Ovary (tissue), 10 donors: ENCODE measurements at regions of chr2 and their contacts with region 1.

Region 1: DNA sequence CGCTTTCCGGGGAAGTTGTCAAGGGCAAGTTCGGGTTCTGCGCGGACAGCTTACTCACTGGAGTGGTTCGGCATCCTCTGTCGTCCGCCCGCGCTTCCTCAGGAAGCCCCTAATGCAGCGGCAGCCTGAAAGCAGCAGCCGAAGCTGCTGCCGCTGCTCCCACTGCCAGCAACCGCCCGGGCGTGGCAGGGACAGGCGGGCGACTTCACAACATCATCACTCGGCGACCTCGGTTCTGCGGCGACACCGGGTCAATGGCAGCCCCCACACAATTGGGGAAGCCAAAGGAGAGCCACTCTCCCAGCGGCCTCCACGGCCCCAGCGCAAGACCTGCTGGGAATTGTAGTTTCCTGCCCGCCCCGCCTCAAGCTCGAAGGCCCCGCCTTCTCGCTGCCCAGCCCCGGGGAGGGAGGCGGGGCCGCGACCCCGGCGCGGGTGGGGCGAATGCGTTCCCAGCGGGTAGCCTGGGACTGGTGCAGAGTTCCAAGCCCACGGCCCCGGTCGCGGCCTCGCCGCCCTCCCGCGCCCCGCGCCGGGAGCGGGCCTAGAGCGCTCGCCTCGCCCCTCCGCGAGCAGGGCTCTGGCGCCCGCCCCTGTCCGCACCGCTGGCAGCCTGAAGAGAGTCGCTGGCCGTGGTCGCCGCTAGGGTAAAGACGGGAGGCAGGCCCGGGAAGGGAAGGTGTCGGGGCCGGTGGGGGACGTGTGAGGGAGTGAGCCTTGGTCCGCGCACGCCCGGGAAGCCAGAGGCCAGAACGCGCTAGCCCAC is at the starts of genes STRADB and TRAK2:
- DNase-seq: peak; percentile 90 to 95 (median 92)
- H3K4me3 ChIP-seq: peak within 1 kb of the TSS; percentile 77
- H3K27ac ChIP-seq: peak within 1 kb of the TSS; percentile 64 to 90
- H3K4me1 ChIP-seq: peaks cover 5% of the 10 kb centered on the region
- H3K27me3 ChIP-seq: no peaks in the 10 kb centered on the region
- CTCF ChIP-seq: peak; percentile 16 to 76 (median 36)
- EP300 ChIP-seq: no peak
- POLR2A ChIP-seq: peak; percentile 58
- total RNA-seq, gene STRADB: 13.7 to 20.4 (median 16.5) TPM
- total RNA-seq, gene TRAK2: 14.3 to 33.7 (median 20.2) TPM

Region 2: DNA sequence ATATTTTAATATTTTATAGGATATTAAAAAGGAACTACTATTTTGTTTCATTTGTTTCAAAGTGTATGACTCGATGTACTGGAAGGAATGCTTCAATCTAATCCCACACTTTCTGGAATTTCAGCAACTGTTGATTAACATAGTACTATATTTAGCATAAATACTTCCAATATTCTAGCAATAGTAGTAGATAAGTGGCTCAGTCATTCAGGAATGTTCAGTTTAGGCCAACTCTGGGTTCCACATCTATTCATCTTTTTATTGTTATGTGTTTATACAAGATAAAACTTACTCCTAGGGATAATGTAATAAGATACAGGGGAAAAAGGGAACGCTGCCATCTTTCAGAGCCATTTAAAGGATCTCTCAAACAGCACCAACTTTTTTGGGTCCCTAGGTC is 465.7 kb before region 1 on chr2:
- intact Hi-C with region 1: no loop called
- DNase-seq: no peak
- H3K4me3 ChIP-seq: no peak overlapping the region
- H3K27ac ChIP-seq: no peak overlapping the region
- H3K4me1 ChIP-seq: no peaks in the 10 kb centered on the region
- H3K27me3 ChIP-seq: no peaks in the 10 kb centered on the region
- CTCF ChIP-seq: no peak
- EP300 ChIP-seq: no peak
- POLR2A ChIP-seq: no peak

Region 3: GRCh38 chr2:201414099-201415023 is 37.1 kb before region 1 on chr2:
- intact Hi-C with region 1: loop called in 1 of 4 experiments (anchors 5 kb)
- DNase-seq: no peak
- H3K4me3 ChIP-seq: no peak overlapping the region
- H3K27ac ChIP-seq: no peak overlapping the region
- H3K4me1 ChIP-seq: peaks cover 4% of the 10 kb centered on the region
- H3K27me3 ChIP-seq: no peaks in the 10 kb centered on the region
- CTCF ChIP-seq: no peak
- EP300 ChIP-seq: no peak
- POLR2A ChIP-seq: no peak

Region 4: GRCh38 chr2:201500534-201500933 is 49.1 kb after region 1 on chr2:
- intact Hi-C with region 1: no loop called
- DNase-seq: no peak
- H3K4me3 ChIP-seq: no peak overlapping the region
- H3K27ac ChIP-seq: no peak overlapping the region
- H3K4me1 ChIP-seq: no peaks in the 10 kb centered on the region
- H3K27me3 ChIP-seq: no peaks in the 10 kb centered on the region
- CTCF ChIP-seq: no peak
- EP300 ChIP-seq: no peak
- POLR2A ChIP-seq: no peak